Common myeloid progenitor, CD34-positive (primary cell): ENCODE measurements at regions of chr1 and their contacts with region 1.

Region 1: DNA sequence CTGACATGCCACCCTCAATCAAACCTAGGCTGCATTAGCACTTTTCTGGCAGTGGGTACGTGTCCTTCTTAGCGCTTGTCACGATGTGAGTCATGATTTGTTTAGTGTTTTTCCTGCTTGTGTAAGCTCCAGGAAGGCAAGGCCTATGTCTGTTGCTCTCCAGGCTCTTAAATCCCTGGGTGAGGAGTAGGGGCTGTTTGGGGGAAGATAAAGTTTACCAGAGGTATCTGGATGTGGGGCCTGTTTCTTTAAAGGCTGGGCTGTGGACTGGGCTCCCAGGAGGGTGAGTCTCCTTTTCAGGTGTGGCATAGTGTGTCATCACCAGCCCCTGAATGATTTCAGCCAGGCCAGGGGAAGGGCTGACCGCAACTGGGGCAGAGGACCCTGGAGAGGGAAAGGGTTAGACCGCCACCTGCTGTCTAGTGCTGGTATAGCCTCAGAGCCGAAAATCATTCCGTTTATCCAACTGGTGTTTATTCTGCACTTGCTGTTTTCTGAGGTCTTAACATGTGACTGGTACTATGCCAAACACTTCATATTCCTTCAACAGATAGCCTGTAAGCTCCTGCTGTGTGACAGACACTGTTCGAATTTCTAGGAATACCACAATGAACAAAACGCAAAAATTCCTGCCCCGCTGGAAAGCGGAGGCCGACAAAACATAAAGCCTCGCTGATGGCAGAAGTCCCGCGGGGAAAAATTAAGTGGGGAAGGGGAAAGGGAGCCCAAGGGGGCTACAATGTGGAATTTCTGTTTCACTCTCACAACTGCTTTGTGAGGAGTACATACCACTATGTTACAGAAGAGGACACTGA is 9.7 kb downstream of the SERINC2 start:
- DNase-seq: peak; percentile 61 to 80 (median 75)
- H3K4me3 ChIP-seq: no peak overlapping the region
- H3K27ac ChIP-seq: no peak overlapping the region
- H3K4me1 ChIP-seq: peaks cover 0 to 13% (median 10%) of the 10 kb centered on the region in 4 experiments
- H3K27me3 ChIP-seq: no peaks in the 10 kb centered on the region

Region 2: DNA sequence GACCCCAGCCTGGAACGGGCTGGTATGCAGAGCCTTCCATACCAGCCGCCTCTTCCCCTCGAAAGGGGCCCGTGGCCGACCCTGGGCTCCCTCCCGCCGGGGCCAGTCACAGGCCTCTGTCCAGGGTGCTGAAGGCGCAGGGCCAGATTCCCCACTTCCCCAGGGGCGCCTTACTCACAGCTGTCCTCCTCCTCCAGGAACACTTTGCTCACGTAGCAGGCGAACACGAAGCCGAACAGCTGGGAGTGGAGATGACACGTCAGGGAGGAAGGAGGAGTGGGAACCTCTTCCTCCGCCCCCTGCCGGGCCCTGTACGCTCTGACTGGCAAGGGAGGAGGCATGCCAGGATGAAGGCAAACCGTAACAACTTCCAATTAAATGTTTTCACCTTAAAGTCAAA is 240.4 kb before region 1 on chr1:
- CTCF ChIA-PET with region 1: interaction called, 10 read pairs
- POLR2A ChIA-PET with region 1: interaction called, 3 read pairs
- DNase-seq: peak; percentile 67 to 75 (median 73)
- H3K4me3 ChIP-seq: peak overlapping the region in 3 of 7 experiments; percentile 48 to 68 (median 62)
- H3K27ac ChIP-seq: no peak overlapping the region
- H3K4me1 ChIP-seq: peaks cover 0 to 14% (median 12%) of the 10 kb centered on the region in 4 experiments
- H3K27me3 ChIP-seq: peaks cover 0 to 15% (median 8%) of the 10 kb centered on the region in 5 experiments

Region 3: DNA sequence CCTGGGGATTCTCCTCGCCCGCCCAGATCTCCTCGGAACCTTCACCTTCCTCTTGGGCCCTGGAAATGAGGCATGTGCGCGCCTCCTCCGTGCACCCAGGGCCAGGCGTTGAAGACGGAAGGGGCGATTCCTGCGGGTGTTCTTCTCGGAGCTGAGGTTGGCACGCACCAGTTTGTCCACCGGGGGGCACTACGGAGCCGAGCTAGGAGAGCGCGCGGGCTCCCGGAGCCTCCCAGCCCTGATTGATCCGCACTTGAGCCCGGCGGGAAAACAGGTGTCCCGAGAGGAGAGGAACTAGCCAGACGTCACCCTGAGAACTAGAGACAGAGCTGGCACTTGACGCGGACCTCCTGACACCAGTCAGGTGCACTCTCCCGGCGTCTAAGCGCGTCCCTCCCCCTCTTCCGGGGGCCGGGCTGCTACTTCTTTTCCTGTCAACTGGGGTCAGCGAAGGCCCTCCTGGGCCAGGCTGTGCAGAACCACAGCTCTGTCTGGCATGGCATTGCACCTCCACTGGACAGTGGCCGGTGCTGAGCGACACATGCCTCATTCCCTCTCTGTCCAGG is 28.0 kb before region 1 on chr1:
- CTCF ChIA-PET with region 1: interaction called, 104 read pairs
- POLR2A ChIA-PET with region 1: no interaction called
- DNase-seq: peak; percentile 75 to 82 (median 80)
- H3K4me3 ChIP-seq: peak overlapping the region; percentile 23 to 82 (median 58)
- H3K27ac ChIP-seq: no peak overlapping the region
- H3K4me1 ChIP-seq: peaks cover 4 to 22% (median 11%) of the 10 kb centered on the region in 4 experiments
- H3K27me3 ChIP-seq: no peaks in the 10 kb centered on the region

Region 4: GRCh38 chr1:31444725-31445448 is 22.2 kb after region 1 on chr1:
- CTCF ChIA-PET with region 1: no interaction called
- POLR2A ChIA-PET with region 1: no interaction called
- DNase-seq: peak in 2 of 3 donors; percentile 36 to 46
- H3K4me3 ChIP-seq: no peak overlapping the region
- H3K27ac ChIP-seq: no peak overlapping the region
- H3K4me1 ChIP-seq: peaks cover 0 to 8% (median 5%) of the 10 kb centered on the region in 4 experiments
- H3K27me3 ChIP-seq: no peaks in the 10 kb centered on the region

Region 5: GRCh38 chr1:31531177-31531999 is 108.7 kb after region 1 on chr1:
- CTCF ChIA-PET with region 1: interaction called, 11 read pairs
- POLR2A ChIA-PET with region 1: no interaction called
- DNase-seq: no peak
- H3K4me3 ChIP-seq: no peak overlapping the region
- H3K27ac ChIP-seq: no peak overlapping the region
- H3K4me1 ChIP-seq: peaks cover 0 to 21% (median 16%) of the 10 kb centered on the region in 4 experiments
- H3K27me3 ChIP-seq: no peaks in the 10 kb centered on the region